Activated CD4-positive, alpha-beta T cell treated with anti-CD3 and anti-CD28 coated beads, Interleukin-2, amount 10 ng/mL, durations not matched to agents 24 days and 14 days (primary cell): ENCODE measurements at regions of chr4 and their contacts with region 1.

Region 1: DNA sequence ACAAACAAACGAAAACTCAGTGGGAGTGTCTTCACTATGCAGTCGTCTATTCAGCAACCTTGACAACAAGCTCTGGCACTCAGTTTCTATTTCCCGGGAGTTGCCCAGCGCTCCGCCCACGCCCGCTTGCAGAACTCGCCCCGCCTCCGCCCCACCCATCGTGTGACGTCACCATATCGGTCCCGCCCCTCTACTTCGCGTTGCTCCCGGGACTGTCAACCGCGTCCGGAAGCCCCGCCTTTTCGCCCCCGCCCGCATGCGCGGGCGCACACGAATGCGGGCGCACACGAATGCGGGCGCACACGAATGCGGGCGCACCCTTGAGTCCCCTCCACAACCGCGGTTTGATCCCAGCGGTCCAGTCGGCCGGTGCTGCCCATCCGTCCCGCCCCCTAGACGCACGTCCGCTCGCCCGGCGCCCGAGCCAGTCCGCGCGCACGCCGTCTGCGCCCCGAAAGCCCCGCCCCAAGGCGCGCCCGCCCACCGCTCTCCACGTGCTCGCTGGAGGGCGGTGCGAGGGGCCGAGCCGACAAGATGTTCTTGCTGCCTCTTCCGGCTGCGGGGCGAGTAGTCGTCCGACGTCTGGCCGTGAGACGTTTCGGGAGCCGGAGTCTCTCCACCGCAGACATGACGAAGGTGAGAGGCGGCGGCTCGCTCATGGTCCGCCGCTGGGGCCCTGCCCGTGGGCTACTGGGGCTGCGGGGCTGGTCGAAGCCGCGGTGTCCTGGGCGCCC is at the start of gene LAP3:
- DNase-seq: peak; percentile 100
- H3K4me3 Mint-ChIP-seq: peak within 1 kb of the TSS; percentile 97
- H3K27ac Mint-ChIP-seq: peak within 1 kb of the TSS; percentile 96
- H3K4me1 Mint-ChIP-seq: peaks cover 37% of the 10 kb centered on the region
- H3K27me3 Mint-ChIP-seq: no peaks in the 10 kb centered on the region
- total RNA-seq, gene LAP3: 114 and 126 TPM in 2 replicates

Region 2: DNA sequence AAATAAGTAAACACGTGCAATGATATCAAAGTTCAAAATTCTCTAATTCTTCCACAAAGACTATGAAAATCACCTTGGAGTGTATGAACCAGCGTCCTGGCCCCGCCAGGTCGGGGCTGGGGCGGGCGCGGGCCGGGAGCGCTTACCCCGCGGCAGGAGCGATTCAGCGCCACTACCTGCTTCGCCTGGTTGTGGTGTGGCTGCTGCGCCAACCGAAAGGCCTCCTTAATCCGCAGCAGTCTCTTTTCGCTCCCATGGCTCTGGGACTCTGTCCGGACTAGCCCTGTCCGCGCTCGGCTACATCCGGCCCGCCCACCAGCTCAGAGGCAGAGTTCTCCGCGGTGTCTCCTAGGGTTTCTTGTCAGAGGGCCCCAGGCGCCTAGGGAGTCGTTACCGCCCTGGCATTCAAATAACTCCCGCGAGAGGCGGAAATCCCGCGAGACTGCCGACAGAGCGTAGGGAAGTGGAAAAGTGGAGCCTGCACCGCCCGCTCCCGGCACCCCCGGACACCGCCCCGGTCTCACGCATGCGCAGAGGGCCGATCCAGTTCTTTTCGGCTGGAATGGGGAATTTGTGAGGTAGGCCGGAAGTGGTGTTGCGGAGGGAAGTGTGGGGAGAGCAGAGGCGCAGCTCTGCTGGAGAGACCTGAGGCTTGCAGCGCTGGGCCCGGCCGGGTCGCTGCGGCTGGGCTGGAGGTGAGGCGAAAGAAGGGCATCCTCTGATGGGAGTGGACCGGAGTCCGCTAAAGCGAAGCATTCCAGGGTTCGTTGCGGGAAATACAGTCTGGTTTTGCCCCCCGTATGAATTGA is 1895.7 kb before region 1 on chr4 and contains the start of gene FAM200B:
- intact Hi-C with region 1: loop called (anchors 5 kb)
- DNase-seq: peak; percentile 100
- H3K4me3 Mint-ChIP-seq: peak within 1 kb of the TSS; percentile 100
- H3K27ac Mint-ChIP-seq: peak within 1 kb of the TSS; percentile 99
- H3K4me1 Mint-ChIP-seq: peaks cover 40% of the 10 kb centered on the region
- H3K27me3 Mint-ChIP-seq: no peaks in the 10 kb centered on the region
- total RNA-seq, gene FAM200B: 6.0 and 9.9 TPM in 2 replicates

Region 3: DNA sequence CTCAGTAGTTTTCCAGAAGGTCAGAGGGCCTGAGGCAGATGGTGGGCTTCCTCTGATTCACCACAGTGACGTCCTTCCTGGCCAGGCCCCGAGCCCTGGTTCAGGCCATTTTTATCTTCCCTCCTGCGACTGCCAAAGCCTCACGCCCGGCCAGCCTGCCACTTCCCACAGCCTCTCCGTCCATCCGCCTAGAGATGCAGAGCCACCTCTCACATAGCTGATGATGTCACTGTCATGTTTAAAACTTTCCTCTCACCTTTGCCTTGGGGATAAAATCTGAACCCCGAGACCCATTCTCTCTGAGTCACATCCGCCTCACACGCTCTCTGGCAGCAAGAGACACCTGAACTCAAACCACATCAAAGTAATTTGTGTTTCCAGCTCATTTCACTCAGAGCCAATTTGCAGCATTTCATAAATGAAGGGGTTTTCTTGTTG is 240.6 kb before region 1 on chr4:
- intact Hi-C with region 1: loop called (anchors 1 kb)
- DNase-seq: peak; percentile 94
- H3K4me3 Mint-ChIP-seq: peak overlapping the region; percentile 60
- H3K27ac Mint-ChIP-seq: peak overlapping the region; percentile 92
- H3K4me1 Mint-ChIP-seq: peaks cover 38% of the 10 kb centered on the region
- H3K27me3 Mint-ChIP-seq: peaks cover 7% of the 10 kb centered on the region

Region 4: DNA sequence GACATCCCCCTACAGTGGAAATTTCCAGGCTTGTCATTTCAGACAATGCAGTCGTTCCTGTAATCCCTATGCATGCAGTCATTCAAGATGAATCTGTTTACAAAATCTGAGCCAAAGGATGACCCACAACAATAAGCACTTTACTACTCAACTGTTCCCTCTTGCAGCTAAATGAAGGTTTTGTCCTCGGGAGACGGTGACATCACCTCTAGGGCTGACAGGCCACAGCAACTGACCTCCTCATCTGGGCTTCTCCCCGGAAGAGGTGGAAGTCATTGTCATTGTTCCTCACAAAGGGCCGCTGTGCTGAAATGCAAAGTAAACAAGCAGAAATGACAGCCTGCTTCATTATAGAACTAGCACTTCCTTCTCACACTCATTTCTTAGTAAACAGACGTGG is 32.9 kb before region 1 on chr4:
- intact Hi-C with region 1: loop called (anchors 1 kb)
- DNase-seq: no peak
- H3K4me3 Mint-ChIP-seq: no peak overlapping the region
- H3K27ac Mint-ChIP-seq: no peak overlapping the region
- H3K4me1 Mint-ChIP-seq: peaks cover 3% of the 10 kb centered on the region
- H3K27me3 Mint-ChIP-seq: peaks cover 12% of the 10 kb centered on the region

Region 5: GRCh38 chr4:17636696-17637622 is 59.9 kb after region 1 on chr4:
- intact Hi-C with region 1: loop called (anchors 2 kb)
- DNase-seq: peak; percentile 91
- H3K4me3 Mint-ChIP-seq: no peak overlapping the region
- H3K27ac Mint-ChIP-seq: no peak overlapping the region
- H3K4me1 Mint-ChIP-seq: no peaks in the 10 kb centered on the region
- H3K27me3 Mint-ChIP-seq: no peaks in the 10 kb centered on the region

Region 6: GRCh38 chr4:18021722-18022571 is 444.8 kb after region 1 on chr4 and contains the start of gene LCORL:
- intact Hi-C with region 1: loop called (anchors 1 kb)
- DNase-seq: peak; percentile 96
- H3K4me3 Mint-ChIP-seq: peak within 1 kb of the TSS; percentile 95
- H3K27ac Mint-ChIP-seq: peak within 1 kb of the TSS; percentile 88
- H3K4me1 Mint-ChIP-seq: peaks cover 17% of the 10 kb centered on the region
- H3K27me3 Mint-ChIP-seq: peaks cover 61% of the 10 kb centered on the region
- total RNA-seq, gene LCORL: 8.7 and 9.3 TPM in 2 replicates